A673 (cell line): ENCODE measurements at regions of chr2 and their contacts with region 1.

Region 1: GRCh38 chr2:209322041-209322440 is 101.8 kb upstream of the MAP2 start:
- DNase-seq: no peak
- H3K4me3 ChIP-seq: no peak overlapping the region
- H3K27ac ChIP-seq: no peak overlapping the region
- H3K4me1 ChIP-seq: no peaks in the 10 kb centered on the region
- H3K27me3 ChIP-seq: peaks cover 25% of the 10 kb centered on the region
- CTCF ChIP-seq: peak; percentile 32; the same call in 1 of the 2 replicates

Region 2: GRCh38 chr2:208350610-208351009 is 971.4 kb before region 1 on chr2:
- CTCF ChIA-PET with region 1: no interaction called
- POLR2A ChIA-PET with region 1: no interaction called
- intact Hi-C with region 1: no loop called
- DNase-seq: no peak
- H3K4me3 ChIP-seq: no peak overlapping the region
- H3K27ac ChIP-seq: no peak overlapping the region
- H3K4me1 ChIP-seq: no peaks in the 10 kb centered on the region
- H3K27me3 ChIP-seq: no peaks in the 10 kb centered on the region
- CTCF ChIP-seq: no peak

Region 3: GRCh38 chr2:208466151-208466919 is 855.7 kb before region 1 on chr2:
- CTCF ChIA-PET with region 1: no interaction called
- POLR2A ChIA-PET with region 1: no interaction called
- intact Hi-C with region 1: loop called (anchors 10 kb)
- DNase-seq: peak; percentile 65
- H3K4me3 ChIP-seq: no peak overlapping the region
- H3K27ac ChIP-seq: no peak overlapping the region
- H3K4me1 ChIP-seq: no peaks in the 10 kb centered on the region
- H3K27me3 ChIP-seq: peaks cover 44% of the 10 kb centered on the region
- CTCF ChIP-seq: peak; percentile 65

Region 4: DNA sequence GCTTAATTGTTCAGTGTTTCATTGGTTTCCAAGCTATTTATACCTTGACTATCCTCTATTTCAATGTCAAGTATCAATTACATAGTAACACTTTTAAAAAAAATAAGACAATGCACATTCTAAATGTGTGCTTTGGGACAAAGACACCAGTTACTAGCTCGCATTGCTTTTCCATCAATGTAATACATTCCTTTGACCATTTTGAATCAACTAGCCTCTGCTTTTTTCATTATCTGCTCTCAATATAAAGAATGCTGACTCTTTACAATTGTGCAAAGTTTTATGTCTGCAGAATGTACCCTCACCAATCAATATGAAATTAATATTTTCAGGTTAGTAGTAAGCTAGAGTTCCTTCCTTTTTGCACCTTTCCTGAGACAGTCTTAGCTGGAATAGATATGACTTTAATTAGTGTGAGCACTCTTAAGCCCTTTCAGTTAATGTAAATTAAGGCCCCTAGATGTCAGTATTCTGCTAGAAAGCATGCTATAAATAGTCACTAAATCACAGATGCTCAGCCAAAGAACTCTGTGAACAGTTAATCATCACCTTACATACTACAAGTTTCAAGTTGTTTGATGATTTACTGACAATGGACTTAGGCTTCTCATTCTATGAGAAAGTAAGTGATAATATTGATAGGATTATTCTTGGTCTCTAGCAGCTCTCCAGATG is 501.9 kb before region 1 on chr2:
- CTCF ChIA-PET with region 1: no interaction called
- POLR2A ChIA-PET with region 1: no interaction called
- intact Hi-C with region 1: loop called (anchors 10 kb)
- DNase-seq: peak; percentile 33
- H3K4me3 ChIP-seq: no peak overlapping the region
- H3K27ac ChIP-seq: no peak overlapping the region
- H3K4me1 ChIP-seq: no peaks in the 10 kb centered on the region
- H3K27me3 ChIP-seq: peaks cover 13% of the 10 kb centered on the region
- CTCF ChIP-seq: peak; percentile 45; the same call in 1 of the 2 replicates

Region 5: GRCh38 chr2:209298601-209299000 is 23.4 kb before region 1 on chr2:
- CTCF ChIA-PET with region 1: no interaction called
- POLR2A ChIA-PET with region 1: no interaction called
- intact Hi-C with region 1: no loop called
- DNase-seq: no peak
- H3K4me3 ChIP-seq: no peak overlapping the region
- H3K27ac ChIP-seq: no peak overlapping the region
- H3K4me1 ChIP-seq: no peaks in the 10 kb centered on the region
- H3K27me3 ChIP-seq: peaks cover 8% of the 10 kb centered on the region
- CTCF ChIP-seq: no peak